ENCODE measurements at regions of chr7 and their contacts with region 1.

Region 1: DNA sequence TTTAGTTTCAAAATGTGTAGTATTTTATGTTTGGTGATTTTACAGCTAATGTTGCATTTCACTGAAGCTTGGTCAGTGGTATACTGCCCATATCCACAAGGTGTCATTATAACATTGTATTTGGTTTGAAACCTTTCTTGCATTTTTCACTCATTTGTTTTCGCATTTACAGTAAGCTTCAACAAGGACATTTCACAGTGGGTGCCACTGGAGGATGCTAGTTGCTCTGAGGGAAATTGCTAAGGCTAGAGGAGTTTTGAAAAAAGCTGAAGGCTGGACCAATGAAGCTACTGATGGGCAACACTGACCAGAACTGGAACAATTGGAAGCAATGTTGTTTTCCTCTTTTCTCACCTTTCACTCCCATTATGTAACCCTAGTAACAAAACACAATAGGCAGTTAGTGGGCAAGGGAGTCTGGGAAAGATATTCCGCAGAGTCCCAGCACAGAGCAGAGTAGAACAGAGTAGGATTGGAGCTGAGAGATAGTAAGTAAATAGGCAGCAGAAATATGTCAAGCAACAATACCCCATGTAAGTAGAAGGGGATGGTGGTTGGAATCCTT is 23.6 kb upstream of the SRI start:
- DNase-seq: peak in 2 of 5 donors; percentile 7 to 12
- H3K4me3 ChIP-seq: no peak overlapping the region
- H3K4me3 Mint-ChIP-seq: no peak overlapping the region
- H3K27ac ChIP-seq: no peak overlapping the region
- H3K27ac Mint-ChIP-seq: no peak overlapping the region
- H3K4me1 ChIP-seq: no peaks in the 10 kb centered on the region
- H3K4me1 Mint-ChIP-seq: no peaks in the 10 kb centered on the region
- H3K27me3 ChIP-seq: no peaks in the 10 kb centered on the region
- H3K27me3 Mint-ChIP-seq: peaks cover 3 to 11% of the 10 kb centered on the region in 2 donors

Region 2: GRCh38 chr7:90119178-90119971 is 1875.9 kb after region 1 on chr7:
- CTCF ChIA-PET with region 1: no interaction called
- POLR2A ChIA-PET with region 1: no interaction called
- intact Hi-C with region 1: loop called (anchors 10 kb)
- DNase-seq: peak; percentile 2 to 38 (median 13)
- H3K4me3 ChIP-seq: no peak overlapping the region
- H3K4me3 Mint-ChIP-seq: peak overlapping the region; percentile 57 to 87 (median 74)
- H3K27ac ChIP-seq: no peak overlapping the region
- H3K27ac Mint-ChIP-seq: no peak overlapping the region
- H3K4me1 ChIP-seq: peaks cover 4% of the 10 kb centered on the region
- H3K4me1 Mint-ChIP-seq: peaks cover 6 to 18% (median 10%) of the 10 kb centered on the region in 4 donors
- H3K27me3 ChIP-seq: no peaks in the 10 kb centered on the region
- H3K27me3 Mint-ChIP-seq: peaks cover 15 to 17% of the 10 kb centered on the region in 2 donors